WTC11 (cell line): ENCODE measurements at regions of chr14 and their contacts with region 1.

Region 1: DNA sequence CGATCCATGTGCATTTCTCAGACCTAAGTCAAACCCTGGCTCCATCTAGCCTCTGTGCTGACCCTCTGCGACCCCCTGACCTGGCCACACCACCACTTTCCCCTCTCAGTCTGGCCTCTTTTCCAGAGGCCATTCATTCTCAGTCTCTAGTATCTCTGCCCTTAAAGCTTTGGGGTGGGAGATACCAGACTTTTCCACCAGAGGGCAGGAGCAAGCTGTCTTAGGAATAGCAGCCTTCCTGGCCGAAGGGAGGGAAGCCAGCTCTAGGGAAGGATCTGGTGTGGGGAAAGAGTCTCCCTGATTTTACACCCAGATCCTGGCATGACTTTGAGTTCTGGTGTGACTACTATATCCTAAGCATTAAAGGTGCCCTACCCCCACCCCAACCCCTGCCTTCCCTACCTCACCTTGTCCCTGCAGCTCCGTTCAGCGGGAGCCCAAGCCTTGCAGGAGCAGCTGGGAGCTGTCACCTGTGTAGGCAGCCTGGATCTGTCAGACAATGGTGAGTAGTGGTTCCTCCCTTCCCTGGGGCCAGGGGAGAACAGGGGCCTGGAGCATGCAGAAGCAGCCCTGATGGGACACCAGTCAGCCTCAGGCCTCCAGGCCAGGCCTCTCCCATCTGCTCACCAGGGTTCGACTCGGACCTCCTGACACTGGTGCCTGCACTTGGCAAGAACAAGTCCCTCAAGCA is 6.6 kb downstream of the CARMIL3 start:
- DNase-seq: peak; percentile 88
- ATAC-seq: peak; percentile 87
- H3K4me3 Mint-ChIP-seq: no peak overlapping the region
- H3K27ac Mint-ChIP-seq: no peak overlapping the region; the same call in 1 of the 2 replicates
- H3K4me1 Mint-ChIP-seq: peaks cover 6% of the 10 kb centered on the region
- H3K27me3 Mint-ChIP-seq: no peaks in the 10 kb centered on the region
- CTCF ChIP-seq: peak; percentile 73

Region 2: GRCh38 chr14:24075485-24076301 is 17.3 kb after region 1 on chr14:
- CTCF ChIA-PET with region 1: interaction called, 101 read pairs
- POLR2A ChIA-PET with region 1: interaction called, 4 read pairs
- DNase-seq: no peak
- ATAC-seq: no peak
- H3K4me3 Mint-ChIP-seq: no peak overlapping the region
- H3K27ac Mint-ChIP-seq: no peak overlapping the region
- H3K4me1 Mint-ChIP-seq: peaks cover 26% of the 10 kb centered on the region
- H3K27me3 Mint-ChIP-seq: peaks cover 2% of the 10 kb centered on the region
- CTCF ChIP-seq: no peak

Region 3: DNA sequence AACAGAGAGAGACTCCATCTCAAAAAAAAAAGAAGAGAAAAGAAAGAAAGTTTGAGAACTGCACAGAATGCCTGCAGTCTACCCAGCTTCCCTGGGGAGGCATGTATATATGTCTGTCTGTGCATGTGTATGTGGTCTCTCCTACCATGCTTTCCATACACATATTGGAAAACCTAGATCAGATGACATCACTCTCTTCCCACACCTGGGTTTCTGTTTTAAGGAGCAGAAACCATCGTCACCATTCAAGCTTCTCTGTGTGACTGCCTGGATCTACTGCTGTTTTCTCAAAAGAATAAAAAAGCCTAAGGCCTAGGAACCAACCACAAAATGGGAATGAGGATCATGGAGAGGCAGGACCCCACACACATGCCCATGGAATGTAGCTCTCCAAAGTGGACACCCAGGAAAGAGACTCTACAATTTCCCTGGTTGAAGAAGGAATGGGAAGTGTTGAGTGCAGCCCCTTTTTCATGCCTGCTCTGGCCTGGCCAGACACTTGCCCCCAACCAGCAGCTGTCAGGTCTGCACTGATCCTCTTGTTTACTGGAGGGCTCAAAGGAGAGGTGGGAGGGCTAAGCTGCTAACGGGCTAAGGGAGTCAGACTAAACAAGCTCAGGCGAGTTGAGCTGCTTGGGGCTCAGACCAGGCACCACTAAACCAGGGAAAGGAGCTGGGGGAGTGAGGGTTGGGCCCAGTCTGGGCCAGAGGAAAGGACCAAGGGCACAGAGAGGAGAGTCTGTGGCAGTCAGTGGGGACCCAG is 28.0 kb after region 1 on chr14:
- CTCF ChIA-PET with region 1: interaction called, 320 read pairs
- POLR2A ChIA-PET with region 1: interaction called, 38 read pairs
- DNase-seq: no peak
- ATAC-seq: no peak
- H3K4me3 Mint-ChIP-seq: no peak overlapping the region
- H3K27ac Mint-ChIP-seq: no peak overlapping the region
- H3K4me1 Mint-ChIP-seq: peaks cover 17% of the 10 kb centered on the region
- H3K27me3 Mint-ChIP-seq: peaks cover 24% of the 10 kb centered on the region
- CTCF ChIP-seq: no peak

Region 4: DNA sequence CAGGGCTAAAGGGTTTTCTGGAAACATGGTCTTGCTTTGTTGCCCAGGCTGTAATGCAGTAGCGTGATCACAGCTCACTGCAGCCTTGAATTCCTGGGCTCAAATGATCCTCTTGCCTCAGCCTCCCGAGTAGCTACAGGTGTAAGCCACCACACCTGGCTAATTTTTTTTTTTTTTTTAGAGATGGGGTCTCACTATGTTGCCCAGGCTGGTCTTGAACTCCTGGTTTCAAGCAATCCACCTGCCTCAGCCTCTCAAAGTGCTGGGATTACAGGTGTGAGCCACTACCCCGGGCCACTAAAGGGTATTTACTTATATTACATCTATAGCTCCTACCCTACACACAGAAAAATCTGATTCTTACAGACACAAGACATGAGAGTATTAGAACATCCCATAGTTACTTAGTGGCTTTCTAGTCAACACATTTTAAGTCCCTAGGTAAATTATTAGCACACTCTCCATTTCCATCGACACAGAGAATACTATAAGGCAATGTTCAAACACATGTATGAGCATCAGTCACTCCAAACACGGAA is 50.0 kb after region 1 on chr14:
- CTCF ChIA-PET with region 1: interaction called, 254 read pairs
- POLR2A ChIA-PET with region 1: interaction called, 13 read pairs
- DNase-seq: no peak
- ATAC-seq: no peak; the same call in 1 of the 2 replicates
- H3K4me3 Mint-ChIP-seq: no peak overlapping the region
- H3K27ac Mint-ChIP-seq: no peak overlapping the region
- H3K4me1 Mint-ChIP-seq: peaks cover 5% of the 10 kb centered on the region
- H3K27me3 Mint-ChIP-seq: no peaks in the 10 kb centered on the region; the same call in 1 of the 2 replicates
- CTCF ChIP-seq: no peak

Region 5: DNA sequence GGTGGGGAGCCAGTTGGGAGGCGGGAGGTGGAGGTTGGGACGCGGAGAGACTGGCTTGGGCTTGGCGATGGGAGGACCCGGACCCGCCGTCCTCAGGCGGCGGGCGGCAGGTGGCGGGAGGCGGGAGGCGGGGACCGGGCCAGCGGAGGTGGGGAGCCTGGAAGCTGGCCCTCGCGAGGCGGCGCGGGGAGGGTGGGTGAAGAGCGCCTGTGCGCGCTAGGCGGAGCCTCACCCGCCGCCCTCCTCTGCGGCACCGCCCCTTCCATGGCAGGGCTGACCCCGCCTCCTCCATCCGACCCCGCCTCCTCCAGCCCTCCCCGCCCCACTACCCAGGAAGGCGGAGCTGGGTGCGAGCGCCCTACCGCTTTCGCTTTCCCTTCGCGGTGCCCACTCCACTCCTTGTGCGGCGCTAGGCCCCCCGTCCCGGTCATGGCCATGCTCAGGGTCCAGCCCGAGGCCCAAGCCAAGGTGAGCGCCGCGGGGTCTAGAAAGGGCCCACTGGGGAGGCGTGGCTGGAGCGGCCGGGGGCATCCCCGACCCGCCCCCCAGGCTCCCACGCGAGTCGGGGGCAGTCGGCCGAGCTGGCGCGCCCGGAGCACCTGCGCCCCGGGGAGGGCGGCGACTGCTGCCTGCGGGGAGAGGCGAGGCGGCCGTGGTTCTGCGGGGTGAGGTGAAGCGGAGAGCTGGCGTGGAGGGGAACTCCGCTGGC is 77.6 kb after region 1 on chr14 and contains the start of gene PSME1:
- CTCF ChIA-PET with region 1: interaction called, 28 read pairs
- POLR2A ChIA-PET with region 1: no interaction called
- DNase-seq: peak; percentile 93
- ATAC-seq: peak; percentile 92
- H3K4me3 Mint-ChIP-seq: peak within 1 kb of the TSS; percentile 86
- H3K27ac Mint-ChIP-seq: peak within 1 kb of the TSS; percentile 88
- H3K4me1 Mint-ChIP-seq: peaks cover 33% of the 10 kb centered on the region
- H3K27me3 Mint-ChIP-seq: no peaks in the 10 kb centered on the region; the same call in 1 of the 2 replicates
- CTCF ChIP-seq: no peak
- total RNA-seq, gene PSME1: 76.8 to 99.1 TPM (median 98.8 TPM) in 3 replicates

Region 6: GRCh38 chr14:24146978-24147760 is 88.8 kb after region 1 on chr14 and contains the start of gene RNF31:
- CTCF ChIA-PET with region 1: interaction called, 12 read pairs
- POLR2A ChIA-PET with region 1: interaction called, 3 read pairs
- DNase-seq: peak; percentile 98
- ATAC-seq: peak; percentile 89
- H3K4me3 Mint-ChIP-seq: peak within 1 kb of the TSS; percentile 99
- H3K27ac Mint-ChIP-seq: peak within 1 kb of the TSS; percentile 98
- H3K4me1 Mint-ChIP-seq: peaks cover 21% of the 10 kb centered on the region
- H3K27me3 Mint-ChIP-seq: no peaks in the 10 kb centered on the region
- CTCF ChIP-seq: no peak
- total RNA-seq, gene RNF31: 63.0 to 86.2 TPM (median 68.4 TPM) in 3 replicates